ENCODE measurements at regions of chr6 and their contacts with region 1.

Region 1: DNA sequence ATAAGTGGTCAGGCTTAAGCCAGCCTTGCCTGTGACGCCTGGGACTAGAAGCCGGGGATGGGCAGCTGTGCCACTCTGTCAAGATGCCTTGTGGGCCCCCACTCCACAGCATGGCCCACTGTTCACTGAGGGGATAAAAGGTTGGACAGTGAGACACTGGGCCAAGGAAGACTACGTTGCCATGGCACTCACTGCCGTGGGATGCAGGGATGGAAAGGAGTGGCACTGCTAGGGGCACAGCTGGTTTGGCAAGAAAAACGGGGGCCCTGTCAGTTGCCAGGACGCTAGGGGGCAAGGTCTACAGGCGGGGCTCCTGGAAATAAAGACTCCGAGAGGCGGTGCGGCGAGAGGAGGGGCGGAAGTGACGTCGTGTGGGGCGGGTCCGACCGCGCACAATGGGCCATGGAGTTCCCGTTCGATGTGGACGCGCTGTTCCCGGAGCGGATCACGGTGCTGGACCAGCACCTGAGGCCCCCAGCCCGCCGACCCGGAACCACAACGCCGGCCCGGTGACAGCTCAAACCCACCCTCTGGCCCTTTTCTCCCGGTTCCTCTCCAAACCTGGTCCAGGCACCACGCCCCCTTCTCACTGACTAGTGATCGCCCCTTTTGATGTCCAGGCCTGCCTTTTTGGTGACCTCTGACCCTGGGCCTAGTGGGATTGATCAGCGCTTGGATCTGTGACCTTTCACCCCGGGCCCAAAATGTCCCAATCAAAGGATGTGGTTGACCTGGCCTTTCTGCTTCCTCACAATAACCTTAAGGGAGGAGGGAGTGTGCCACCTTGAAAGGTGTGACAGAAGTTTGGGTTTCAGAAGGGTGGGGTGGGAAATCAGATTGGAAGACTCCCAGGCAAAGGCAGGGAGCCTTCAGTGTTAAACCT is at the start of gene ATAT1:
- DNase-seq: peak; percentile 87 to 91 (median 91)
- ATAC-seq: peak; percentile 97 to 98 (median 98)
- H3K4me3 ChIP-seq: peak within 1 kb of the TSS; percentile 49 to 63 (median 61)
- H3K27ac ChIP-seq: peak within 1 kb of the TSS; percentile 74 to 84 (median 76)
- H3K4me1 ChIP-seq: peaks cover 0 to 7% (median 3%) of the 10 kb centered on the region in 4 donors
- H3K27me3 ChIP-seq: no peaks in the 10 kb centered on the region
- CTCF ChIP-seq: peak in 3 of 4 donors; percentile 13 to 31 (median 29)
- POLR2A ChIP-seq: peak; percentile 48
- total RNA-seq, gene ATAT1: 2.4 to 6.6 (median 4.4) TPM

Region 2: GRCh38 chr6:30672445-30673253 is 45.9 kb after region 1 on chr6 and contains the start of gene DHX16:
- intact Hi-C with region 1: loop called in 1 of 2 experiments (anchors 10 kb)
- DNase-seq: peak; percentile 93 to 96 (median 94)
- ATAC-seq: peak; percentile 84 to 89 (median 84)
- H3K4me3 ChIP-seq: peak within 1 kb of the TSS; percentile 91 to 100 (median 100)
- H3K27ac ChIP-seq: peak within 1 kb of the TSS; percentile 54 to 60 (median 58)
- H3K4me1 ChIP-seq: peaks cover 0 to 45% (median 10%) of the 10 kb centered on the region in 4 donors
- H3K27me3 ChIP-seq: no peaks in the 10 kb centered on the region
- CTCF ChIP-seq: peak; percentile 82 to 89 (median 86)
- POLR2A ChIP-seq: peak; percentile 44
- total RNA-seq, gene DHX16: 12.3 to 17.8 (median 14.4) TPM

Region 3: GRCh38 chr6:30730601-30731435 is 104.1 kb after region 1 on chr6:
- intact Hi-C with region 1: loop called in 1 of 2 experiments (anchors 10 kb)
- DNase-seq: peak; percentile 83 to 88 (median 87)
- ATAC-seq: peak; percentile 93 to 99 (median 95)
- H3K4me3 ChIP-seq: no peak overlapping the region
- H3K27ac ChIP-seq: no peak overlapping the region
- H3K4me1 ChIP-seq: peaks cover 0 to 4% (median 0%) of the 10 kb centered on the region in 4 donors
- H3K27me3 ChIP-seq: no peaks in the 10 kb centered on the region
- CTCF ChIP-seq: peak; percentile 62 to 80 (median 74)
- POLR2A ChIP-seq: no peak